PC-3 (cell line): ENCODE measurements at regions of chr11 and their contacts with region 1.

Region 1: GRCh38 chr11:107438148-107438547 is 19.5 kb downstream of the CWF19L2 start:
- DNase-seq: no peak
- ATAC-seq: no peak
- H3K4me3 ChIP-seq: no peak overlapping the region
- H3K27ac ChIP-seq: no peak overlapping the region
- H3K4me1 ChIP-seq: no peaks in the 10 kb centered on the region
- H3K27me3 ChIP-seq: no peaks in the 10 kb centered on the region
- CTCF ChIP-seq: peak; percentile 54

Region 2: GRCh38 chr11:106714199-106714598 is 723.9 kb before region 1 on chr11:
- CTCF ChIA-PET with region 1: no interaction called
- POLR2A ChIA-PET with region 1: no interaction called
- intact Hi-C with region 1: loop called (anchors 10 kb)
- DNase-seq: peak; percentile 28
- ATAC-seq: peak; percentile 51
- H3K4me3 ChIP-seq: no peak overlapping the region
- H3K27ac ChIP-seq: no peak overlapping the region
- H3K4me1 ChIP-seq: peaks cover 21% of the 10 kb centered on the region
- H3K27me3 ChIP-seq: no peaks in the 10 kb centered on the region
- CTCF ChIP-seq: no peak

Region 3: GRCh38 chr11:107252429-107253161 is 185.6 kb before region 1 on chr11:
- CTCF ChIA-PET with region 1: no interaction called
- POLR2A ChIA-PET with region 1: no interaction called
- intact Hi-C with region 1: loop called (anchors 1 kb)
- DNase-seq: no peak
- ATAC-seq: no peak
- H3K4me3 ChIP-seq: no peak overlapping the region
- H3K27ac ChIP-seq: no peak overlapping the region
- H3K4me1 ChIP-seq: no peaks in the 10 kb centered on the region
- H3K27me3 ChIP-seq: no peaks in the 10 kb centered on the region
- CTCF ChIP-seq: no peak